A549 (cell line): ENCODE measurements at regions of chr12 and their contacts with region 1.

Region 1: GRCh38 chr12:30985814-30986452 is 59.4 kb downstream of the TSPAN11 start:
- DNase-seq: peak; percentile 55 to 73
- ATAC-seq: peak; percentile 82 to 93
- H3K4me3 ChIP-seq: no peak overlapping the region
- H3K27ac ChIP-seq: no peak overlapping the region
- H3K4me1 ChIP-seq: no peaks in the 10 kb centered on the region
- CTCF ChIP-seq: peak; percentile 67
- EP300 ChIP-seq: no peak
- POLR2A ChIP-seq: no peak
- RAD21 ChIP-seq: peak; percentile 72 to 78

Region 2: GRCh38 chr12:30970559-30971197 is 15.3 kb before region 1 on chr12:
- CTCF ChIA-PET with region 1: interaction called, 70 read pairs
- POLR2A ChIA-PET with region 1: no interaction called
- DNase-seq: no peak
- ATAC-seq: no peak
- H3K4me3 ChIP-seq: no peak overlapping the region
- H3K27ac ChIP-seq: no peak overlapping the region
- H3K4me1 ChIP-seq: no peaks in the 10 kb centered on the region
- CTCF ChIP-seq: no peak
- EP300 ChIP-seq: no peak
- POLR2A ChIP-seq: no peak
- RAD21 ChIP-seq: no peak

Region 3: DNA sequence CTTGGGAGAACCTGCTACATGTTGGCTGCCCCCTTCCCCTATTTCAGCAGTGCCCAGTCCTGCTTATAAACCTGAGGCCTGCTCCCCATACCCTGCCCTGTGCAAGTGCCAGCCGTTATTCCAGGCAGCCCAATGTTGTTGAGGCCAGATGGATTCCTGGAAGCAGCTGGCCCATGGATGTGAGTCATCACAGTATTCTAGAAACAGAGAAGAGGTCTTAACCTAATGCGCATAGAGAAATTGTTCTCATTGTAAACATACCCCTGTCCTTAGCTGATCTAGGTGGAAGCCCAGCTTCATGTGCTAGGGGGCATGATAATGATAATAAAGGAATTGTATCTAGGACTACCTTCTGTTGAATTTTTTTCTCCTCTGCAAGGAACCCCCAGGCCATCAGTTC is 10.3 kb after region 1 on chr12:
- CTCF ChIA-PET with region 1: interaction called, 15 read pairs
- POLR2A ChIA-PET with region 1: no interaction called
- DNase-seq: no peak
- ATAC-seq: no peak
- H3K4me3 ChIP-seq: no peak overlapping the region
- H3K27ac ChIP-seq: no peak overlapping the region
- H3K4me1 ChIP-seq: no peaks in the 10 kb centered on the region
- CTCF ChIP-seq: no peak
- EP300 ChIP-seq: no peak
- POLR2A ChIP-seq: no peak
- RAD21 ChIP-seq: no peak

Region 4: GRCh38 chr12:31015215-31015614 is 29.3 kb after region 1 on chr12:
- CTCF ChIA-PET with region 1: no interaction called
- POLR2A ChIA-PET with region 1: no interaction called
- DNase-seq: no peak
- ATAC-seq: no peak
- H3K4me3 ChIP-seq: no peak overlapping the region
- H3K27ac ChIP-seq: no peak overlapping the region
- H3K4me1 ChIP-seq: no peaks in the 10 kb centered on the region
- CTCF ChIP-seq: no peak
- EP300 ChIP-seq: no peak
- POLR2A ChIP-seq: no peak
- RAD21 ChIP-seq: no peak